Aorta (tissue), 5 donors: ENCODE measurements at regions of chr6 and their contacts with region 1.

Region 1: GRCh38 chr6:159174263-159174969 is 5.2 kb downstream of the FNDC1 start:
- DNase-seq: peak; percentile 82 to 92
- ATAC-seq: peak; percentile 85
- H3K4me3 ChIP-seq: no peak overlapping the region
- H3K27ac ChIP-seq: no peak overlapping the region
- H3K4me1 ChIP-seq: no peaks in the 10 kb centered on the region
- H3K27me3 ChIP-seq: no peaks in the 10 kb centered on the region

Region 2: GRCh38 chr6:159212028-159212427 is 37.6 kb after region 1 on chr6:
- intact Hi-C with region 1: loop called (anchors 5 kb)
- DNase-seq: no peak
- ATAC-seq: no peak
- H3K4me3 ChIP-seq: no peak overlapping the region
- H3K27ac ChIP-seq: no peak overlapping the region
- H3K4me1 ChIP-seq: peaks cover 0 to 3% of the 10 kb centered on the region in 2 donors
- H3K27me3 ChIP-seq: no peaks in the 10 kb centered on the region

Region 3: GRCh38 chr6:159252955-159253508 is 78.6 kb after region 1 on chr6:
- intact Hi-C with region 1: loop called in 1 of 2 experiments (anchors 10 kb)
- DNase-seq: no peak
- ATAC-seq: no peak
- H3K4me3 ChIP-seq: no peak overlapping the region
- H3K27ac ChIP-seq: no peak overlapping the region
- H3K4me1 ChIP-seq: peaks cover 0 to 2% of the 10 kb centered on the region in 2 donors
- H3K27me3 ChIP-seq: no peaks in the 10 kb centered on the region

Region 4: GRCh38 chr6:159305804-159306537 is 131.6 kb after region 1 on chr6:
- intact Hi-C with region 1: loop called in 1 of 2 experiments (anchors 5 kb)
- DNase-seq: no peak
- ATAC-seq: no peak
- H3K4me3 ChIP-seq: no peak overlapping the region
- H3K27ac ChIP-seq: no peak overlapping the region
- H3K4me1 ChIP-seq: peaks cover 4 to 8% of the 10 kb centered on the region in 2 donors
- H3K27me3 ChIP-seq: no peaks in the 10 kb centered on the region

Region 5: DNA sequence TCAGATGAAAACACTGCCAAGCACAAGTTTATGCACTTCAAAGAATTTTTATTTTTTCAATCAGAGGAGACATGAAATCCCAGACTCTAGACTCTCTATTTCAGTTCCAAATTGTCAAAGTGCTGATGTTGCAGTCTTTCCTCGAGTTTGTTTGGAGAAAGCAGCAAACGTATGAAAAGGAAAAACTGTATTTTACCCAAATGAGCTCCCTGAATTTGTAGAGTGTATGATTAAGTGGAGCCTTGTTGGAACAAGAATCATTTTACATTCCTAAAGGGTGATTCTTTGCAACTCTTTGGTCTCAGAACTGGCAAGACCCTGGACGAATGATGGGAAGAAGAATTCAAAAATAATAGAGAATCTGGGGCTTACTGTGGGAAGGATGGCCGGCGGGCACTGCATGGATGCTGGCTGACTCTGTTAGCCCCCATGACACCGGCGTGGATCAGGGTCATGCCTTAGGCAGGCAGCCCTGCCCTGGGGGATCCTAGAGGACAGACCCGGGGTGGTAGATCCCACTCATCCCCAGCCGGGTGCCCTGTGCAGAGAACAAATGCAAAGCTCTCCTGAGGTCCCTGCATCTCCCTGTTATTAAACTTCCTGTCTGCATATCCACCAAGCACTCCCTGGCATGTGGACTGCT is 202.2 kb after region 1 on chr6:
- intact Hi-C with region 1: loop called in 1 of 2 experiments (anchors 10 kb)
- DNase-seq: no peak
- ATAC-seq: peak; percentile 53
- H3K4me3 ChIP-seq: no peak overlapping the region
- H3K27ac ChIP-seq: peak overlapping the region; percentile 56 to 84
- H3K4me1 ChIP-seq: no peaks in the 10 kb centered on the region
- H3K27me3 ChIP-seq: no peaks in the 10 kb centered on the region

Region 6: DNA sequence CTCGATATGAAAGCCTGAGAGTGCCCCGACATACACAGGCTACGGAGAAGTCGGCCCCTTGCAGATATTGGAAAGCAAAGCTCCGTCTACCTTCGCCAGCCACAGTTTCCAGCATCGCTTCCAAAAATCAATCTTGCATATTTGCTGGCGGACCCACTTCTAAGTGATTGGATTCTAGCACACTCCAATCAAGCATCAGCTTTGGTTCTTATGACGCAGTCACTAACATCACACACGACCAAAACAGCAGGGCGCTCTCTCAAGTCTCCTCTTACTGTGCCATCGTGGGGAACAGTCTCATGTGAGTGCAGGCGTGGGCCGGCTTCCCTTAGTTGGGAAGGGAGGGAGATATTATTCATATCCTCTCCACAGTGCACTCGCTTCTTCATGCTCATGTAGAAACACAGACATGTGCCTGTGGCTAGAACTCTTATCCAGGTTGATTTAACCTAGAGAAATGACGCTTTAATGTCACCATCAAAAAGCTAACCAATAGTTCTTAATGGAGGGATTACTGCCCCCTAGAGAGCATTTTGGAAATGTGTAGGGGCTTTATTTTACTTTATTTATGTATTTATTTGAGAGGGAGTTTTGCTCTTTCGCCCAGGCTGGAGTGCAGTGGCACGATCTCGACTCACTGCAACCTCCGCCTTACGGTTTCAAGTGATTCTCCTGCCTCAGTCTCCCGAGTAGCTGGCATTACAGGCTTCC is 288.9 kb after region 1 on chr6:
- intact Hi-C with region 1: loop called (anchors 2 to 5 kb)
- DNase-seq: no peak
- ATAC-seq: no peak
- H3K4me3 ChIP-seq: no peak overlapping the region
- H3K27ac ChIP-seq: no peak overlapping the region
- H3K4me1 ChIP-seq: no peaks in the 10 kb centered on the region
- H3K27me3 ChIP-seq: no peaks in the 10 kb centered on the region

Region 7: DNA sequence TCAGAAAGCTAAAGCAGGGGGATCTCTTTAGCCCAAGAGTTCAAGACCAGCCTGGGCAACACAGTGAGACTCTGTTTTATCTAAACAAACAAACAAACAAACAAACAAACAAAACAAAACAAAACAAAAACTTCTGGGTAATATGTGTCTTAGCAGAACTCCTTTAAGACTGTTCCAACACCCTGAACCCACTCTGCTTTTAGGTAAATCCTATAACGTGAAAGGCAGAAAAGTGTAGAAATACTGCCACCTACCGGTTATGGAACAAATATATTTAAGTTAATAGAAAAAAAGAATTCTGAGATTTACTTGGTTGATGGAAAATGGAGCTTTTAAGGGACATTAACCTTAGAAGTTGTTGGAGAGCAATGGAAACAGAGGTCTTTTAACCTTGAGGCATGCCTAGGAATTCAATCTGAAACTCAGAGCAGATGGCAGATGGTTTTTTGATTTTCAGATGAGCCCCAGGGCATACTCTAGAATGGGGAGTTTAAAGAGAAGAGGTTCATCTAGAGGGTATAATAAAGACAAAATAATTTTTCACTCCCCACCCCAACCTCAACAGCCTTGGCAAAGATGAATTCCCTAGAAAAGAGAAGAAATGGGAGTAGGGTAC is 480.2 kb after region 1 on chr6:
- intact Hi-C with region 1: loop called (anchors 2 kb)
- DNase-seq: no peak
- ATAC-seq: peak; percentile 54
- H3K4me3 ChIP-seq: no peak overlapping the region
- H3K27ac ChIP-seq: no peak overlapping the region
- H3K4me1 ChIP-seq: no peaks in the 10 kb centered on the region
- H3K27me3 ChIP-seq: no peaks in the 10 kb centered on the region